GM12878 (cell line): ENCODE measurements at regions of chr7 and their contacts with region 1.

Region 1: DNA sequence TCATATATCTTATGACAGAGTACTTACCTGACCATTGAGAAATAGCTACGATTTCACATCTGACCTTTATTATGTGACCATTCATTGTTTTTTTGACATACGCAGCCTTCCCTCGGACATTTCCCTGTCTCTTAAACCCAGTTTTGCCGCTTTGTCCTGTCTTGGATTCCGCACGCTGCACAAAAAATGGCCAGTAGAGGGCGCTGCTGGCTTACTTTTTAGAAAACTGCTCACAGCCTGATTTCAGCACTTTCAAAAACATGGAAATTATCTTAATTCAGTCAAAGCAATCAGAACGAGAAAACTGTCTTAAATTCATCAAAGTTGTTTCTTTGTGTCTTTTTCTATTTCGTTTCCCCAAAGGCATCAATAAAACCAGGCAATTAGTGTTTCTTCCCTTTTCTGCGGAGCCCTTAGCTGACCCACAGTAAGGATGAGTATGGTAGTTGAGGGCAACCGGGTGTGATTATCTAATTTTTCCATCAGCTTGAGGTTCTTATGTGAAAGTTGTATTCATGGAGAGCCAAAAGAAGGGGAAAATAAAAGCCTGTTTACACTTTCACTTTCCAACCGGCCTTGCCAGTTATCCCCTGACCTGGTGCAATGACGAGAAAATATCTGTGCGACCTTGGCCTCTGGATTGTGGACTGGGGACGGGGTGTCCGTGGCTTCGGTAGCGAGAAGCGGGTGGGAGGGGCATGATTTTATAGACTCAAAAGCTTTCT is 144.4 kb downstream of the DYNC1I1 start:
- DNase-seq: peak; percentile 3
- ATAC-seq: peak; percentile 90
- H3K4me3 ChIP-seq: no peak overlapping the region
- H3K27ac ChIP-seq: no peak overlapping the region
- H3K4me1 ChIP-seq: no peaks in the 10 kb centered on the region
- H3K27me3 ChIP-seq: no peaks in the 10 kb centered on the region; a peak in 1 of 4 replicates
- CTCF ChIP-seq: peak; percentile 74 to 93 (median 87)
- EP300 ChIP-seq: no peak
- POLR2A ChIP-seq: no peak
- RAD21 ChIP-seq: peak; percentile 93

Region 2: DNA sequence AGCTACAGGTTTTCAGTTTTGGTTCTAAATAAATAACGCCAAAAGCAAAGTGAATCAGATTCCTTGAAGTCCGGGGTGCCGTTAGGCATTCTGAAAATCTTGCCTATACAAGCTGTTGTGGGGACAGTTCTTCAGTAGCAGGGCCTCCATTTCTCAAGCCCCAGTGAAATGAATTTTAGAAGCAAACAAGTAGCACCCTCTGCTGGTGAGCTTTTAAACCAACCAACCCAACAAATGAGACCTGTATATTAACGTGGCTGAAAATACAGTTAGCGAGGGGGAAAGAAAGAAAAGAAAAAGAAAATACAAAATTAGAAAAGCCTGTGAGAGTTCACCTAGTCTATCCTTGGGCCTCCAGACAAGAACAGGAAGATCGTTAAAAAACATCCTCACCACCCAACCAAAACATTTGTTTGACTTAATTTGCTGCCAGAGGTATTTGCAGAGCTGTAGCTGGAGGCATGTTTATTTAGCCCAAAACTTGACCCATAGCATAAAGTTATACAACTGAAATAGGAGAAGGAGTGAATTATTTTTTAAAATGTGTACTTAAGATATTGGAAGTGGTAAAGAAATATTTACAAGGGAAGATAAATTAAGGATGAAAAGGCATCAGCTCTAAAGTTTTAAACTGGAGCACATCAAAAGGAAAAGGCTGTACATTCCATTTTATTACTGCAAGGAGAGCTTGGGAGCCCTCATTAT is 45.5 kb before region 1 on chr7:
- CTCF ChIA-PET with region 1: interaction called, 19 read pairs
- POLR2A ChIA-PET with region 1: no interaction called
- RAD21 ChIA-PET with region 1: no interaction called
- SMC1A ChIA-PET with region 1: no interaction called
- in situ Hi-C with region 1: no loop called
- intact Hi-C with region 1: no loop called
- DNase-seq: no peak
- ATAC-seq: peak; percentile 69
- H3K4me3 ChIP-seq: no peak overlapping the region
- H3K27ac ChIP-seq: no peak overlapping the region
- H3K4me1 ChIP-seq: no peaks in the 10 kb centered on the region
- H3K27me3 ChIP-seq: no peaks in the 10 kb centered on the region
- CTCF ChIP-seq: peak; percentile 55 to 77 (median 63)
- EP300 ChIP-seq: no peak
- POLR2A ChIP-seq: no peak
- RAD21 ChIP-seq: peak; percentile 70

Region 3: DNA sequence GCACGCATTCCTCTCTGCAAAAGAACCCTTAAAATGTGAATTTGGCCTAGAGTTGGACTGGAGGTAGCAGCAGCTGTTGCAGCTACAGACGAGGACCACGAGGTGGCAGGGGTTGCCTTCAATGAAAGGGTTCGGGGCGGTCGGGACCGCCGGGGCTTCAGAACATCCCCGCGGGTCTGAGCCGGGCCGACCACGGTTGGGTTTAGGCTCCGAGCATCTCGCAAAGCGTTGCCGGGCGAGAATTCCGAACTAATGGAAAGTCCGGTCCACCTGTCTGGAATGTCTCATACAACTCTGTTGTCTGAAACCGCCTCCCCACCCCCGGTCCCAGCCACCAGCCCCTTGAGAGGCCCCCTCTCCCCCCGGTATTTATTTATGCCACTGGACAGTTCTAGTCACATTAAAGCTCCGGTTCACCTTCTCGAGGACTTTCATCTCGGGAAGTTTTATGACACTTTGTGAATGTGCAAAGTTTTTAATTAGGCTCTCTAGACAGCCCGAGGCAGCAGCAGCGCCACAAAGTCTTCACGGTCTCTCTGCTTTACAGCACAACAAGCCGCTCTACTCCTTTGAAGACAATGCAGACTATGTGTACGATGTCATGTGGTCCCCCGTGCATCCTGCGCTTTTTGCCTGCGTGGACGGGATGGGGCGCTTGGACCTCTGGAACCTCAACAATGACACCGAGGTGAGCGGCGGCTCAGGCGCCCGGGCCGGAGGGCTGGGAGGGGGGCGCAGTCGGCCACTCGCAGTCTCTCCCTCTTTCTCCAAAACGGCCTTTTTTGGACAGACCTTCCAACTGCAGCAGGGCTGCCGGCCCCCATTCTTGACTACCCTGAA is 159.0 kb after region 1 on chr7:
- CTCF ChIA-PET with region 1: no interaction called
- POLR2A ChIA-PET with region 1: no interaction called
- RAD21 ChIA-PET with region 1: no interaction called
- SMC1A ChIA-PET with region 1: no interaction called
- in situ Hi-C with region 1: no loop called
- intact Hi-C with region 1: loop called (anchors 5 kb)
- DNase-seq: no peak
- ATAC-seq: peak; percentile 96
- H3K4me3 ChIP-seq: peak overlapping the region; percentile 7; the same call in 1 of the 2 replicates
- H3K27ac ChIP-seq: no peak overlapping the region
- H3K4me1 ChIP-seq: no peaks in the 10 kb centered on the region
- H3K27me3 ChIP-seq: peaks cover 3 to 11% of the 10 kb centered on the region in 2 experiments; a peak in 3 of 4 replicates
- CTCF ChIP-seq: peak; percentile 74 to 80 (median 77)
- EP300 ChIP-seq: no peak
- POLR2A ChIP-seq: no peak
- RAD21 ChIP-seq: peak; percentile 81

Region 4: GRCh38 chr7:96093435-96093834 is 176.7 kb after region 1 on chr7:
- CTCF ChIA-PET with region 1: no interaction called
- POLR2A ChIA-PET with region 1: no interaction called
- RAD21 ChIA-PET with region 1: no interaction called
- SMC1A ChIA-PET with region 1: no interaction called
- in situ Hi-C with region 1: no loop called
- intact Hi-C with region 1: no loop called
- DNase-seq: no peak
- ATAC-seq: no peak
- H3K4me3 ChIP-seq: no peak overlapping the region
- H3K27ac ChIP-seq: no peak overlapping the region
- H3K4me1 ChIP-seq: no peaks in the 10 kb centered on the region
- H3K27me3 ChIP-seq: no peaks in the 10 kb centered on the region
- CTCF ChIP-seq: no peak
- EP300 ChIP-seq: no peak
- POLR2A ChIP-seq: no peak
- RAD21 ChIP-seq: no peak

Region 5: DNA sequence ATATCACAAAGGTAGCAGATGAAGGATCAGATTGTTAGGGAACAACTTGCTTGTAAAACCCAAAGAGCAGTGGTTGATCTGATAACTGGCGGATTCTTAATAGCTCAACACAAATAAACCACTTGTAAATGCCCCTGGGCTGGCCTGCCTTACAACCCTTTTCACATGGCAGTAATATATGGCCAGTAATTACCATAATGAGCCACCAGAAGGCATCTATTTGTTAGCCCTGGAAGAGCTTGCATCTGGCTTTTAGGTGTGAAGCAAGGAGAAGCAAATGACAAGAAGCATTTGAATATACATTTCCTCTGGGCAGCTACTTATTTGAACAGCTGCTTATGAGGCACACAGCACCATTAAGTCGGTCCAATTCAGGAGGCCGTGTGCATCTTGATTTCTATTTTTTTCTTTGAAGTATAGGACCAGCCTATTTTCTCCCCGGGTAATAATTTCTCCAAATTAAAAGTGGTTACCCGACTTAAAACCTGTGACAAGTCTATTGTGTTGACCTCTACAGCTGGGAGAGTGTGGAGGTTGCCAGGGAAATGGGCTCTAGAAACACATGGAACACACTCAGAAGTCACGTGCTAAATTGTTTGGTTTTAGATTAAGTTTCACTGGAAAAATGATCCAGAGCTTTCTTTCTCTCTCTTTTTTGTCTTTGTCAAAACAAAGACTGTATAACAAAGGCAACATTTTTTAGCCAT is 679.5 kb after region 1 on chr7:
- CTCF ChIA-PET with region 1: no interaction called
- POLR2A ChIA-PET with region 1: no interaction called
- RAD21 ChIA-PET with region 1: no interaction called
- SMC1A ChIA-PET with region 1: no interaction called
- in situ Hi-C with region 1: no loop called
- intact Hi-C with region 1: loop called (anchors 10 kb)
- DNase-seq: no peak
- ATAC-seq: peak; percentile 34; the same call in 1 of the 3 replicates
- H3K4me3 ChIP-seq: no peak overlapping the region
- H3K27ac ChIP-seq: no peak overlapping the region
- H3K4me1 ChIP-seq: no peaks in the 10 kb centered on the region
- H3K27me3 ChIP-seq: no peaks in the 10 kb centered on the region
- CTCF ChIP-seq: peak; percentile 9 to 18 (median 10); a peak in 3 of 6 replicates
- EP300 ChIP-seq: no peak
- POLR2A ChIP-seq: no peak
- RAD21 ChIP-seq: peak; percentile 48

Region 6: DNA sequence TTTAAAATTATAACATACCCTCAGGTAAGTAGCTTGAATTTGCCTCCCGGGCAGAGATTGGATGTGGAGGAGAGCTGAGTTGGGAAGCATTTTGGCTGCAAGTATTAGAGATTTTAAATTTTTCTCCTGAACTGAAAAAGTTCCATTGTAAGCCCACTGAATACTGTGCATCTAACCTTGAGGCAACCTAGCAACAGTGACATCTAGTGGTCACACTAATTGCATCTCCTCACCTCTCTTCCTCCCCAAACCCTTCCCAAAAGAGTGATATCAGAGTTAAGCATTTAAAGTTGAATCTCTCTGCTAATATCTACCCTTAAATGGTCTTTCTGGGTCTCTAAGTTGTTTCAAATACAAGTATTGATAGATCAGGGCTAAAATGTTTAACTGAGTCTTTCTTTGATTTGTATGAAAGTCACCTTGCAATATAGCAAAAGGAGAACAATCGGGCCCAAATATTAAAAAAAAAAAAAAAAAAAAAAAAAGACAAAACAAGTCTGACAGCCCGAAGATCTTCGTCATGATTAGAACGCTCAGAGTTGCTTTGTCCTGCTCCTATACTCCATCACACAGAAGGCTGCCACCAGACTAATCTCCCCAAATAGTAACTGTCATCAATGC is 1148.3 kb after region 1 on chr7:
- CTCF ChIA-PET with region 1: interaction called, 8 read pairs
- POLR2A ChIA-PET with region 1: no interaction called
- RAD21 ChIA-PET with region 1: no interaction called
- SMC1A ChIA-PET with region 1: interaction called, 6 read pairs
- in situ Hi-C with region 1: no loop called
- intact Hi-C with region 1: loop called (anchors 1 kb)
- DNase-seq: no peak
- ATAC-seq: peak; percentile 96
- H3K4me3 ChIP-seq: no peak overlapping the region
- H3K27ac ChIP-seq: no peak overlapping the region
- H3K4me1 ChIP-seq: no peaks in the 10 kb centered on the region
- H3K27me3 ChIP-seq: no peaks in the 10 kb centered on the region
- CTCF ChIP-seq: peak; percentile 57 to 70 (median 68)
- EP300 ChIP-seq: no peak
- POLR2A ChIP-seq: no peak
- RAD21 ChIP-seq: peak; percentile 37; the same call in 1 of the 2 replicates